ENCODE measurements at regions of chr7 and their contacts with region 1.

Region 1: GRCh38 chr7:68429411-68430117 is 1168.7 kb upstream of the AUTS2 start:
- DNase-seq: no peak
- H3K4me3 ChIP-seq: no peak overlapping the region
- H3K27ac ChIP-seq: no peak overlapping the region
- H3K4me1 ChIP-seq: no peaks in the 10 kb centered on the region
- H3K27me3 ChIP-seq: no peaks in the 10 kb centered on the region
- CTCF ChIP-seq: no peak
- POLR2A ChIP-seq: no peak

Region 2: DNA sequence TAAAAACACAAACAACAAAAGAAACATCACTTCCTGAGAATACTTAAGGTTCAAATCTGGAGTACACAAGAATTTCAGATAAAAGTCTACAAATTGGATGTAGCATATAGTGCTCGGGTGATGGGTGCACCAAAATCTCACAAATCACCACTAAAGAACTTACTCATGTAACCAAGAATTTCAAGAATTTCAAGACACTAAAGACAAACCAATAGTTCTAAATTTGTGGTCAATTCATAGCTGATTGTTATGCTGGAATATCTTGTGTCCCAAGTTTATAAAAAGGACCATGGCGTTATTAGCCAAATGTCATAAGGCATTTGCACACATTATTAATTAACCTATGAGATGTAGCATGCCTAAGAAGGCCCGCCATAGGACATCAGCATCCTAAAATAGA is 35.4 kb before region 1 on chr7:
- intact Hi-C with region 1: no loop called
- DNase-seq: no peak
- H3K4me3 ChIP-seq: no peak overlapping the region
- H3K27ac ChIP-seq: no peak overlapping the region
- H3K4me1 ChIP-seq: no peaks in the 10 kb centered on the region
- H3K27me3 ChIP-seq: no peaks in the 10 kb centered on the region
- CTCF ChIP-seq: no peak
- POLR2A ChIP-seq: no peak

Region 3: GRCh38 chr7:68458010-68458908 is 28.7 kb after region 1 on chr7:
- intact Hi-C with region 1: loop called (anchors 2 kb)
- DNase-seq: no peak
- H3K4me3 ChIP-seq: no peak overlapping the region
- H3K27ac ChIP-seq: no peak overlapping the region
- H3K4me1 ChIP-seq: no peaks in the 10 kb centered on the region
- H3K27me3 ChIP-seq: no peaks in the 10 kb centered on the region
- CTCF ChIP-seq: no peak
- POLR2A ChIP-seq: no peak

Region 4: GRCh38 chr7:69295977-69296376 is 866.4 kb after region 1 on chr7:
- intact Hi-C with region 1: no loop called
- DNase-seq: no peak
- H3K4me3 ChIP-seq: no peak overlapping the region
- H3K27ac ChIP-seq: no peak overlapping the region
- H3K4me1 ChIP-seq: no peaks in the 10 kb centered on the region
- H3K27me3 ChIP-seq: no peaks in the 10 kb centered on the region
- CTCF ChIP-seq: no peak
- POLR2A ChIP-seq: no peak

Measured in breast epithelium (tissue), 4 donors.